GM12878 (cell line): ENCODE measurements at regions of chr11 and their contacts with region 1.

Region 1: DNA sequence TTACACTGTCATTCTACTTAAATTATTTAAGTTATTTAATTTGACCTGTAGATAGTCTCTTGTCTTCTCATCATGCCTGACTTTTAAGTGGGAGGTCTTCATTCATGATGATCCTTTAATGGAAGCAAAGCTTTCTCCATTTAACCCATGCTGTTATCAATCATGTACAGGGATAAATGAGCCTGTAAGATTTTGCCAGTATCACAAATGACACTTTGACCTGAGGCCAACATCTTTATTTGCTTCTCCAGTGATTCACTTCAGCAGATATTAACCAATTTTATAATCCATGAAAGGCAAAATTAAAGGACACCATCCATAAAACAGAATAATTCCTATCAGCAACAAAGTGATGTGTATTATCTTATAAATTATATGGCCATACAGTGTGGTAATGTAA is 7.7 kb downstream of the CCDC73 start:
- DNase-seq: no peak
- ATAC-seq: no peak
- H3K4me3 ChIP-seq: no peak overlapping the region
- H3K27ac ChIP-seq: no peak overlapping the region
- H3K4me1 ChIP-seq: no peaks in the 10 kb centered on the region
- H3K27me3 ChIP-seq: no peaks in the 10 kb centered on the region
- CTCF ChIP-seq: no peak
- EP300 ChIP-seq: no peak
- POLR2A ChIP-seq: no peak
- RAD21 ChIP-seq: no peak

Region 2: DNA sequence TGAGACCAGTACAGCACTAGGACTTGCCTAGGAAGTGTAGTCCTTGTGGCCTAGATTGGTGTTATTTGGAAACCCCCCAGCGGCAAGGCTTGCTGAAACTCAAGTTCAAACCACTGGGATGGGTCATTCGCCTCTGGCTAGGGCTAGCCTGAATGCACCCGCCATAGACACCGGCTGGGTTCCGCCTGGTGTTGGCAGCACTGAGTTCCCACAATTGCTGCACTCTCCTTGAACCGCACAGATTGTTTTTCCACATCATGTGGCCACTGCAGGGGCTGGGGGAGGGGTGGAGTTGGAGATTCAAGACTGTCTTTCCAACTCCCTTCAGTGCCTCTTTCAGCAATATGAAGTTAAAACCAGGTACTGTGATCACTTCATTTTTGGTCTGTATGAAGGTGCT is 35.4 kb before region 1 on chr11:
- CTCF ChIA-PET with region 1: interaction called, 82 read pairs
- POLR2A ChIA-PET with region 1: no interaction called
- RAD21 ChIA-PET with region 1: interaction called, 25 read pairs
- SMC1A ChIA-PET with region 1: interaction called, 34 read pairs
- in situ Hi-C with region 1: loop called (anchors 5 kb)
- intact Hi-C with region 1: no loop called
- DNase-seq: no peak
- ATAC-seq: peak; percentile 27
- H3K4me3 ChIP-seq: no peak overlapping the region
- H3K27ac ChIP-seq: no peak overlapping the region
- H3K4me1 ChIP-seq: no peaks in the 10 kb centered on the region
- H3K27me3 ChIP-seq: no peaks in the 10 kb centered on the region; a peak in 1 of 4 replicates
- CTCF ChIP-seq: no peak
- EP300 ChIP-seq: no peak
- POLR2A ChIP-seq: no peak
- RAD21 ChIP-seq: no peak

Region 3: GRCh38 chr11:32858731-32859130 is 71.9 kb after region 1 on chr11:
- CTCF ChIA-PET with region 1: no interaction called
- POLR2A ChIA-PET with region 1: no interaction called
- RAD21 ChIA-PET with region 1: no interaction called
- SMC1A ChIA-PET with region 1: no interaction called
- in situ Hi-C with region 1: no loop called
- intact Hi-C with region 1: no loop called
- DNase-seq: no peak
- ATAC-seq: no peak
- H3K4me3 ChIP-seq: no peak overlapping the region
- H3K27ac ChIP-seq: no peak overlapping the region
- H3K4me1 ChIP-seq: no peaks in the 10 kb centered on the region
- H3K27me3 ChIP-seq: no peaks in the 10 kb centered on the region
- CTCF ChIP-seq: no peak
- EP300 ChIP-seq: no peak
- POLR2A ChIP-seq: no peak
- RAD21 ChIP-seq: no peak